ENCODE measurements at regions of chr2 and their contacts with region 1.

Region 1: DNA sequence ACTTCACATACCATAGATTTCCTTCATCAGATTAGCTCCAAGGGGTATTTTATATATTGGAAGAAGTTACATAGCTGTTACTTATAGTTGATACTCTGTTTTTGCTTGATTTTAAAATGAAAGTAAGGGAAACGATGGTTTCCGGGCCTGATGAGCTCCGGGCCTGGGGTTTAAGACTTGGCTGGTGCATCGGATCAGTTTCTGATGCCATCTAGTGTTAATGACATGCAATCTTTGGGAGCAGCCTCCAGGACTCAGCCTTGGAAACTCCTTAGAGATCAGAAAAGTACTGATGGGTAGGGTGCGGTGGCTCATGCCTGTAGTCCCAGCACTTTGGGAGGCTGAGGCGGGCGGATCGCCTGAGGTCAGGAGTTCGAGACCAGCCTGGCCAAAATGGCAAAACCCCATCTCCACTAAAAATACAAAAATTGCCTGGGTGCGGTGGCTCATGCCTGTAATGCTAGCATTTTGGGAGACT is 47.1 kb upstream of the CNOT11 start:
- DNase-seq: peak; percentile 52
- H3K4me3 ChIP-seq: no peak overlapping the region
- H3K27ac ChIP-seq: no peak overlapping the region
- H3K4me1 ChIP-seq: no peaks in the 10 kb centered on the region
- H3K27me3 ChIP-seq: no peaks in the 10 kb centered on the region
- CTCF ChIP-seq: peak; percentile 37

Region 2: GRCh38 chr2:101012706-101013181 is 192.8 kb before region 1 on chr2:
- intact Hi-C with region 1: loop called (anchors 5 kb)
- DNase-seq: peak; percentile 44
- H3K4me3 ChIP-seq: no peak overlapping the region
- H3K27ac ChIP-seq: no peak overlapping the region
- H3K4me1 ChIP-seq: no peaks in the 10 kb centered on the region
- H3K27me3 ChIP-seq: no peaks in the 10 kb centered on the region
- CTCF ChIP-seq: peak; percentile 76

Region 3: GRCh38 chr2:101036562-101037457 is 168.8 kb before region 1 on chr2:
- intact Hi-C with region 1: loop called (anchors 5 kb)
- DNase-seq: no peak
- H3K4me3 ChIP-seq: no peak overlapping the region
- H3K27ac ChIP-seq: no peak overlapping the region
- H3K4me1 ChIP-seq: no peaks in the 10 kb centered on the region
- H3K27me3 ChIP-seq: no peaks in the 10 kb centered on the region
- CTCF ChIP-seq: peak; percentile 46

Measured in colonic mucosa (tissue), 4 donors.